ENCODE measurements at regions of chr12 and their contacts with region 1.

Region 1: DNA sequence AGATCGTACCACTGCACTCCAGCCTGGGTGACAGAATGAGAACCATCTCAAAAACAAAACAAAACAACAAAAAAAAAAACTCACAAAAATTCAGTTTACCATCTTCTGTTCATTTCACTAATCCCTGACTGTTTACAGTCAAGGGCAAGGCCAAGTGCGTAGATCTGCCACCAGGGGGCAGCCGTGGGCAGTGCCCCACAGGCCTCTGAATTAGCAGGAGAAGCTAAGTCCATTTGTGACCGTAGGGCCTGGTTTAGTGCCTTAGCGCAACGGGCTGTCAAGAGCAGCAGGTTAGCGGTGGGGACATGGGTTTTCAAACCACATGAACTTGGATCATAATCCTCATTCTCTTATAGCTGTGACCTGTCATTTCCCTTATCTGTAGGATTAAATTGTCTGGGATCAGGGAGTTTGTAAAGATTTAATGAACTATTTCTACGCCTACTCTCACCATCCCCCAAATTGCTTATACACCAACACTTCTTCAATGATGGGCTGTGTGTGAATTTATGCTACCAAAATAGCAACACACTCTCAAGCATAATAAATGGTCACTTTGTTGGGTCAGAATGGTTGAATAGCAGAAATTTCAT is 49.0 kb downstream of the KCTD10 start:
- DNase-seq: no peak
- H3K4me3 ChIP-seq: no peak overlapping the region
- CTCF ChIP-seq: peak; percentile 95

Region 2: GRCh38 chr12:109440851-109441493 is 12.8 kb after region 1 on chr12:
- CTCF ChIA-PET with region 1: interaction called, 61 read pairs
- POLR2A ChIA-PET with region 1: no interaction called
- DNase-seq: no peak
- H3K4me3 ChIP-seq: no peak overlapping the region
- CTCF ChIP-seq: no peak

Region 3: GRCh38 chr12:109482491-109483261 is 54.5 kb after region 1 on chr12:
- CTCF ChIA-PET with region 1: interaction called, 199 read pairs
- POLR2A ChIA-PET with region 1: no interaction called
- DNase-seq: no peak
- H3K4me3 ChIP-seq: no peak overlapping the region
- CTCF ChIP-seq: no peak

Region 4: GRCh38 chr12:109512608-109513007 is 84.5 kb after region 1 on chr12:
- CTCF ChIA-PET with region 1: interaction called, 20 read pairs
- POLR2A ChIA-PET with region 1: no interaction called
- DNase-seq: no peak
- H3K4me3 ChIP-seq: no peak overlapping the region
- CTCF ChIP-seq: no peak

Region 5: GRCh38 chr12:109775172-109775881 is 347.2 kb after region 1 on chr12:
- CTCF ChIA-PET with region 1: interaction called, 37 read pairs
- POLR2A ChIA-PET with region 1: no interaction called
- DNase-seq: no peak
- H3K4me3 ChIP-seq: no peak overlapping the region
- CTCF ChIP-seq: peak; percentile 91

Region 6: GRCh38 chr12:109797905-109798669 is 370.0 kb after region 1 on chr12:
- CTCF ChIA-PET with region 1: no interaction called
- POLR2A ChIA-PET with region 1: no interaction called
- DNase-seq: no peak
- H3K4me3 ChIP-seq: no peak overlapping the region
- CTCF ChIP-seq: no peak